CD4-positive, alpha-beta T cell (primary cell): ENCODE measurements at regions of chr5 and their contacts with region 1.

Region 1: DNA sequence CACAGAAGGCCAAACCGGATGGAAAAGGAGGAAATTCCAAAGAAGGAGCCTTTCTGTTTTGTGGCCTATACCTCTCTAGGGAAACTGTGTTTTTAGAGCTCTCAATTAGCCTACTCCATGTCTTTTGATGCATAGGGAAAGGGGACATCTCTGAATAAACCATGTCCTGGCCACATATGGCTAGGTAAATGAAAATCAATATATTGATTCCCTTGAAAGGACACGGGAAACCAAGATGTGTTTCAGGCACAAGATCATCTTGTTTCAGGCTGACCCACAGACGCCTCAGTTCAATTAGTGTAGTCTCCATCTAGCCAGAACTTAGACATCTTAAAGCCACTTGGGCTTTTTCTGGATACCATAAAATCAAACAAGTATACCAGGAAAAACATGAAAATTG is 363.1 kb downstream of the ENC1 start:
- DNase-seq: no peak
- ATAC-seq: no peak
- H3K4me3 ChIP-seq: no peak overlapping the region
- H3K4me3 Mint-ChIP-seq: no peak overlapping the region
- H3K27ac ChIP-seq: no peak overlapping the region
- H3K27ac Mint-ChIP-seq: no peak overlapping the region
- H3K4me1 ChIP-seq: no peaks in the 10 kb centered on the region
- H3K4me1 Mint-ChIP-seq: no peaks in the 10 kb centered on the region
- H3K27me3 ChIP-seq: no peaks in the 10 kb centered on the region
- H3K27me3 Mint-ChIP-seq: no peaks in the 10 kb centered on the region
- CTCF ChIP-seq: no peak

Region 2: GRCh38 chr5:74240786-74241750 is 36.4 kb before region 1 on chr5:
- CTCF ChIA-PET with region 1: no interaction called
- POLR2A ChIA-PET with region 1: no interaction called
- intact Hi-C with region 1: no loop called
- DNase-seq: no peak
- ATAC-seq: no peak
- H3K4me3 ChIP-seq: no peak overlapping the region
- H3K4me3 Mint-ChIP-seq: no peak overlapping the region
- H3K27ac ChIP-seq: no peak overlapping the region
- H3K27ac Mint-ChIP-seq: no peak overlapping the region
- H3K4me1 ChIP-seq: no peaks in the 10 kb centered on the region
- H3K4me1 Mint-ChIP-seq: no peaks in the 10 kb centered on the region
- H3K27me3 ChIP-seq: no peaks in the 10 kb centered on the region
- H3K27me3 Mint-ChIP-seq: peaks cover 11% of the 10 kb centered on the region
- CTCF ChIP-seq: no peak

Region 3: DNA sequence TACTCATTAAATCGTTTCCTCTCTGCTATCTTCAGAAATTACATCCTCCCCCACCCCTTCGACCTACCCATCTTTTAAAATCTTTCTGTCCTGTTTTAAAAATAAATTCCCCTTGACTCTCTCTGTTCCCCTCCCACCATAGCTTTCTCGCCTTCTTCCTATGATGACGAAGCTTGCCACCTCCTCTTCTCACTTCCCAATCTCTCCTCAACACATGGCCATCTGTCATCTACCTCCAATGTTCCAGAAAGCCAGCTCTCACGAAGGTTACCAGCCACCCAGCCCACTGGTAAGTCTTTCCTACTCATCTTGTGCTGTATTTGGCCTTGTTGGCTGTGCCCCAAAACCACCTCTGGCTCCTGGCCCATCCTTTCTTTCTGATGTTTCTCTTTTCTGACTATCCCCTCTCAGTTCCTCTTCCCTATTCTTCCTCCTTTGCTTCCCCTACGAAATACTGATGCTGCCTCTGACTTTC is 16.9 kb after region 1 on chr5:
- CTCF ChIA-PET with region 1: no interaction called
- POLR2A ChIA-PET with region 1: no interaction called
- intact Hi-C with region 1: loop called in 1 of 2 experiments (anchors 1 kb)
- DNase-seq: peak in 2 of 14 experiments; percentile 34 to 53
- ATAC-seq: no peak
- H3K4me3 ChIP-seq: no peak overlapping the region
- H3K4me3 Mint-ChIP-seq: no peak overlapping the region
- H3K27ac ChIP-seq: no peak overlapping the region
- H3K27ac Mint-ChIP-seq: no peak overlapping the region
- H3K4me1 ChIP-seq: no peaks in the 10 kb centered on the region
- H3K4me1 Mint-ChIP-seq: no peaks in the 10 kb centered on the region
- H3K27me3 ChIP-seq: peaks cover 0 to 4% of the 10 kb centered on the region in 2 experiments
- H3K27me3 Mint-ChIP-seq: peaks cover 8% of the 10 kb centered on the region
- CTCF ChIP-seq: no peak